ENCODE measurements at regions of chr17 and their contacts with region 1.

Region 1: DNA sequence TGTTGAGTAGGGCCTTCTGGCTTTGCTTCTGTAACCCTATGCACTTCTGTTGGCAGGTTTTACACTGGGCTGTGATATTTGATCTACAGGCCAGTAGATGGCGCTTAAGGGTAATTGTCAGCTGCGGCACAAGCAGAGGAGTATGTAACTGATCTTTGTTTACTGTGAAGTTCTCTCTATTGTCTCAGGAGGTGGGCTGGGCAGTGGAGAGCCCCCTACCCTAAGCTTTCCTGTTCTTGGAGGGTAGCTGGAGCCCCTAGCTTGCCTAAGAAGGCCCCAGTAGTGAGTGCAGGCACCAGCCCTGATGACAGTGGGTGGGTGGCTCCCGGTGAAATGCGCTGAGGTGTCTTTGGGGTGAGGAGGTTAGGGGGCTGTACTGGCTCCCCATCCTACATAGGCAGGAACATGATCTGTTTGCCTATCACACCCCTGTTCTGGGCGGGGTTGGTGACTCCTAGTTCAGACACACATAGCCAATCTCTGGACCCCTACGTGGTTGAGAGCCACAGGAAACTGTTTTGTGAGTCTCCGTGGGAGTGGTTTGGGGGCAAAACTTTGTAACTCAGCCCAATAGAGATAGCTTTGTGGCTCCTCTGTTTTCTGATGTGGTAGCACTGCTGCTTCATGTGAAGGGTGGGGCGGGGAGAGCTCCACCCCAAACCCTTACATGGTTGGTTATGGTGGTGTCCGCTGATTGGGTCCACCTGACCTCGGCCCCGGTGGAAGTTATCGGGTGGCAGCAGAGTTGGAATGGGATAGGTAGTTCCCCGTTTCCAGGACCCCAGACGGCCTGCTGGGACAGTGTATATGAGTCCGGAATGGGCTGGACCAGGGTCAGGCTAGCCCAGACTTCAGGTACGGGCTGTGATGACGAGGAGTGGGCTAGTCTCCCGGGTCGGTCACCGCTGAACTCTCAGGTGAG is 60.4 kb downstream of the SLFN11 start:
- DNase-seq: peak; percentile 81
- H3K4me3 Mint-ChIP-seq: peak overlapping the region; percentile 82
- H3K27ac Mint-ChIP-seq: peak overlapping the region; percentile 83
- H3K4me1 Mint-ChIP-seq: peaks cover 30% of the 10 kb centered on the region
- H3K27me3 Mint-ChIP-seq: no peaks in the 10 kb centered on the region

Region 2: DNA sequence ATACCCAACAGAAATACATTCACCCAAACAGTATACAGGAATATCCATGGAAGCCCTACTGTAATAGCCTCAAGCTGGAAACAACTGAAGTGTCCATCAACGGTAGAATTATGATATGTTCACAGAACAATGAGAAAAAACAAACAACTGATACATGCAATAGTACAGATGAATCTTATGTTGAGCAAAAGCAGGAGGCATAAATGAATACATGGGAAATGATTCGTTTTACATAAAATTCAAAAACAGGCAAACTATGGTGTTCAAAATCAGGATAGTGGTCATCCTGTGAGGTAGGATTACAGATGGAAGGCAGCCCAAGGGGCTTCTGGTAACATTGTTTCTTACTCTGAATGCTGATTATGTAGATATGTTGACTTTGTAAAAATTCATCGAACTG is 274.6 kb before region 1 on chr17:
- CTCF ChIA-PET with region 1: no interaction called
- POLR2A ChIA-PET with region 1: no interaction called
- intact Hi-C with region 1: no loop called
- DNase-seq: no peak
- H3K4me3 Mint-ChIP-seq: no peak overlapping the region
- H3K27ac Mint-ChIP-seq: no peak overlapping the region
- H3K4me1 Mint-ChIP-seq: peaks cover 23% of the 10 kb centered on the region
- H3K27me3 Mint-ChIP-seq: no peaks in the 10 kb centered on the region

Region 3: GRCh38 chr17:35170968-35171771 is 141.9 kb before region 1 on chr17:
- CTCF ChIA-PET with region 1: interaction called, 4 read pairs
- POLR2A ChIA-PET with region 1: no interaction called
- intact Hi-C with region 1: loop called (anchors 5 kb)
- DNase-seq: peak; percentile 10
- H3K4me3 Mint-ChIP-seq: no peak overlapping the region
- H3K27ac Mint-ChIP-seq: peak overlapping the region; percentile 38
- H3K4me1 Mint-ChIP-seq: peaks cover 33% of the 10 kb centered on the region
- H3K27me3 Mint-ChIP-seq: no peaks in the 10 kb centered on the region

Region 4: DNA sequence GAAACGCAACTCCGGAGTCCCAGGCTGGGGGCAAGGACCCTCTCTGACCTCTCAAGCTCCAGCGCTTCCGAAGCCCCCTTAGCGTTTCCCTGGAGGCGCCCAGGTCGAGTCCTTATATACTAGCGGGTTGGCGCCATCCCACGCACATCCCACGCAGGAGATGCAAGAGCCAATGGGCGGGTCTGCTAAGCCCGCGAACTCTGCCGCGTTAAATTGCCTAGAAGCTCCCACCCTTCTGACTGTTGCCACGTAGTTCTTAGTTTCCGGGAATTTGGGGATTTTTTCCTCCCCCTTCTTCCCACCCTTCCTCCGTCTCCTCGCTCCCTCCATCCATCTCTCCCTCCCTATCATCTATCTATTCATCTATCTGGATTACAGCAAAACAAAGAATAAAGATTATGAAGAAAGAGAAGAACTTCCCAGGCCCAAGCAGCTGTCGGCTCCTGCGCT is 60.5 kb after region 1 on chr17 and contains the start of gene SLFN11:
- CTCF ChIA-PET with region 1: interaction called, 13 read pairs
- POLR2A ChIA-PET with region 1: interaction called, 18 read pairs
- intact Hi-C with region 1: loop called (anchors 1 kb)
- DNase-seq: peak; percentile 94
- H3K4me3 Mint-ChIP-seq: peak within 1 kb of the TSS; percentile 96
- H3K27ac Mint-ChIP-seq: peak within 1 kb of the TSS; percentile 97
- H3K4me1 Mint-ChIP-seq: peaks cover 53% of the 10 kb centered on the region
- H3K27me3 Mint-ChIP-seq: no peaks in the 10 kb centered on the region
- total RNA-seq, gene SLFN11: 64.8 to 68.8 TPM

Region 5: GRCh38 chr17:35407531-35407930 is 94.5 kb after region 1 on chr17:
- CTCF ChIA-PET with region 1: no interaction called
- POLR2A ChIA-PET with region 1: no interaction called
- intact Hi-C with region 1: no loop called
- DNase-seq: no peak
- H3K4me3 Mint-ChIP-seq: no peak overlapping the region
- H3K27ac Mint-ChIP-seq: no peak overlapping the region
- H3K4me1 Mint-ChIP-seq: no peaks in the 10 kb centered on the region
- H3K27me3 Mint-ChIP-seq: no peaks in the 10 kb centered on the region

Region 6: GRCh38 chr17:35467824-35468223 is 154.8 kb after region 1 on chr17:
- CTCF ChIA-PET with region 1: no interaction called
- POLR2A ChIA-PET with region 1: no interaction called
- intact Hi-C with region 1: no loop called
- DNase-seq: no peak
- H3K4me3 Mint-ChIP-seq: no peak overlapping the region
- H3K27ac Mint-ChIP-seq: peak overlapping the region; percentile 12
- H3K4me1 Mint-ChIP-seq: peaks cover 35% of the 10 kb centered on the region
- H3K27me3 Mint-ChIP-seq: no peaks in the 10 kb centered on the region

Region 7: GRCh38 chr17:35486920-35487732 is 174.1 kb after region 1 on chr17:
- CTCF ChIA-PET with region 1: interaction called, 19 read pairs
- POLR2A ChIA-PET with region 1: interaction called, 5 read pairs
- intact Hi-C with region 1: loop called (anchors 1 kb)
- DNase-seq: peak; percentile 93
- H3K4me3 Mint-ChIP-seq: peak overlapping the region; percentile 80
- H3K27ac Mint-ChIP-seq: peak overlapping the region; percentile 88
- H3K4me1 Mint-ChIP-seq: peaks cover 45% of the 10 kb centered on the region
- H3K27me3 Mint-ChIP-seq: no peaks in the 10 kb centered on the region

Region 8: GRCh38 chr17:35587074-35587971 is 274.3 kb after region 1 on chr17 and contains the start of gene AP2B1:
- CTCF ChIA-PET with region 1: interaction called, 4 read pairs
- POLR2A ChIA-PET with region 1: interaction called, 3 read pairs
- intact Hi-C with region 1: loop called (anchors 1 kb)
- DNase-seq: peak; percentile 98
- H3K4me3 Mint-ChIP-seq: peak within 1 kb of the TSS; percentile 93
- H3K27ac Mint-ChIP-seq: peak within 1 kb of the TSS; percentile 97
- H3K4me1 Mint-ChIP-seq: peaks cover 23% of the 10 kb centered on the region
- H3K27me3 Mint-ChIP-seq: no peaks in the 10 kb centered on the region
- total RNA-seq, gene AP2B1: 187 to 192 TPM